B cell (primary cell): ENCODE measurements at regions of chr4 and their contacts with region 1.

Region 1: DNA sequence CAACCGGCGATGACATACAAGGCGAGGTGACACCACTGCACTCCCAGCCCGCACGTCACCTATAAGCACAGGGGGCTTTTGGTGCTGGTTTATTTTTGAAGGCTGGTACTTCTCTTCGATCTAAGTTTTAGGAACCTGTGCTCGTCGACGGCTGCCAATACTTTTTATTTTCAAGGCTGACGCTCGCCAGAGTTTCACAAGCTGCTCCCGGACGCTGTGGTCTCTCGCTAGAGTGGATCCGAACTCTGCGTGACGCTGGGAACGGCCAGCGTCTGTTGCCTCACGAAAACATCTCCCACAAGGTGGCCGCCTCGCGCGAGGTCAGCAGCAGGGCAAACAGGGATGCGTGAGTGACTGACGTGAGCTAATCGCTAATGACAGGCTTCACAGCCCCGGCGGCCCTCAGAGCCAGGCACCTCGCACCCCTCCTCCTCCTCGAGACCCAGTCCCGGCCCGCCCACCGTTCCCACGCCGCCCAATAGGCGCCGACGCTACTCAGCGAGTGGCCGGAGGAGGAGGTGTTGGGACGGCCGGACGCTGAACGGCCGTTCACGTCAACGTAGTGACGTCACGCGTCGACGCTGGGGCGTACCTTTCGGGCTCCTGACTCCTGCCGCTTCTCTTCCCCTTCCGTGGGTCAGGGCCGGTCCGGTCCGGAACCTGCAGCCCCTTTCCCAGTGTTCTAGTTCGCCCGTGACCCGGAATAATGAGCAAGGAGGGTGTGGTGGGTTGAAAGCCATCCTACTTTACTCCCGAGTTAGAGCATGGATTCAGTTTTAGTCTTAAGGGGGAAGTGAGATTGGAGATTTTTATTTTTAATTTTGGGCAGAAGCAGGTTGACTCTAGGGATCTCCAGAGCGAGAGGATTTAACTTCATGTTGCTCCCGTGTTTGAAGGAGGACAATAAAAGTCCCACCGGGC is at the start of gene CLCN3:
- DNase-seq: peak; percentile 99
- ATAC-seq: peak; percentile 93
- H3K4me3 ChIP-seq: peak within 1 kb of the TSS; percentile 61 to 100 (median 95)
- H3K4me3 Mint-ChIP-seq: peak within 1 kb of the TSS; percentile 96
- H3K27ac ChIP-seq: peak within 1 kb of the TSS; percentile 98
- H3K27ac Mint-ChIP-seq: peak within 1 kb of the TSS; percentile 100
- H3K4me1 ChIP-seq: peaks cover 18 to 23% of the 10 kb centered on the region in 2 donors
- H3K4me1 Mint-ChIP-seq: peaks cover 39% of the 10 kb centered on the region
- H3K27me3 ChIP-seq: no peaks in the 10 kb centered on the region
- H3K27me3 Mint-ChIP-seq: no peaks in the 10 kb centered on the region
- CTCF ChIP-seq: no peak
- total RNA-seq, gene CLCN3: 32.7 and 34.9 TPM in 2 replicates

Region 2: GRCh38 chr4:168318266-168318895 is 1301.8 kb before region 1 on chr4 and contains the start of gene DDX60:
- CTCF ChIA-PET with region 1: no interaction called
- POLR2A ChIA-PET with region 1: no interaction called
- intact Hi-C with region 1: loop called (anchors 10 kb)
- DNase-seq: peak; percentile 91
- ATAC-seq: peak; percentile 94
- H3K4me3 ChIP-seq: peak within 1 kb of the TSS; percentile 64 to 90 (median 83)
- H3K4me3 Mint-ChIP-seq: peak within 1 kb of the TSS; percentile 98
- H3K27ac ChIP-seq: peak within 1 kb of the TSS; percentile 80 to 95
- H3K27ac Mint-ChIP-seq: peak within 1 kb of the TSS; percentile 98
- H3K4me1 ChIP-seq: peaks cover 11 to 12% of the 10 kb centered on the region in 2 donors
- H3K4me1 Mint-ChIP-seq: peaks cover 28% of the 10 kb centered on the region
- H3K27me3 ChIP-seq: no peaks in the 10 kb centered on the region
- H3K27me3 Mint-ChIP-seq: no peaks in the 10 kb centered on the region
- CTCF ChIP-seq: peak; percentile 30
- total RNA-seq, gene DDX60: 20.2 and 21.3 TPM in 2 replicates

Region 3: DNA sequence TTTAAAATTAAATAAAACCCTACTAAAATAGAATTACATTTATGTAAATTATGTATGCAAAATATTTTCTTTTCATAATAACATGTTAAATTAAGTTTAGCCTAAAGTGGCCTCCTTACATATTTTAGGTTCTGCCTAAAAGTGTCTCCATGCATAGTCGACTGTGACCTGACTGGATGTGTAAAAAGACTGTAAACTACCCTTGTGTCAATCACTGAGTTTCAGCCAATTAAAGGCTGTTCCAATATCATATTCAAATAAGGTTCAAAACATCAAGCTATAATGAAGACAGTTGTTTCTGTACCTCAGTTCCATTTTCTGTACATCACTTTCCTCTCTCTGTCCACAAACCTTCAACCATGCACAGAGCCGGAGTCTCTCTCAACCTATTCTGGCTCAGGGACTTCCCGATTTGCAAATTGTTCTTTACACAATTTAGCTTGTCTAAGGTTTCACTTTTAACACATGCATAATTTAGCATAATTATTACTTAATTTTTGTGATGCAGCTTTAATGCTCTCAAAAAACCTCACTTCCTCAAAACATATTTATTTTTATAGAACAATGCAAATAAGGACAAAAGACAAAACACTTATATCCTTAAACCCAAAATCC is 409.6 kb before region 1 on chr4:
- CTCF ChIA-PET with region 1: no interaction called
- POLR2A ChIA-PET with region 1: no interaction called
- intact Hi-C with region 1: loop called (anchors 1 kb)
- DNase-seq: peak; percentile 81
- ATAC-seq: peak; percentile 85
- H3K4me3 ChIP-seq: peak overlapping the region in 2 of 5 experiments; percentile 18 to 36
- H3K4me3 Mint-ChIP-seq: peak overlapping the region; percentile 83
- H3K27ac ChIP-seq: peak overlapping the region; percentile 74 to 76
- H3K27ac Mint-ChIP-seq: peak overlapping the region; percentile 92
- H3K4me1 ChIP-seq: peaks cover 24 to 29% of the 10 kb centered on the region in 2 donors
- H3K4me1 Mint-ChIP-seq: peaks cover 43% of the 10 kb centered on the region
- H3K27me3 ChIP-seq: no peaks in the 10 kb centered on the region
- H3K27me3 Mint-ChIP-seq: no peaks in the 10 kb centered on the region
- CTCF ChIP-seq: no peak

Region 4: GRCh38 chr4:169270810-169271691 is 349.2 kb before region 1 on chr4 and contains the start of gene SH3RF1:
- CTCF ChIA-PET with region 1: no interaction called
- POLR2A ChIA-PET with region 1: no interaction called
- intact Hi-C with region 1: loop called (anchors 10 kb)
- DNase-seq: peak; percentile 74
- ATAC-seq: peak; percentile 61
- H3K4me3 ChIP-seq: peak within 1 kb of the TSS; percentile 65 to 90 (median 77)
- H3K4me3 Mint-ChIP-seq: peak within 1 kb of the TSS; percentile 94
- H3K27ac ChIP-seq: peak within 1 kb of the TSS in 1 of 2 donors; percentile 16
- H3K27ac Mint-ChIP-seq: peak within 1 kb of the TSS; percentile 81
- H3K4me1 ChIP-seq: peaks cover 23 to 27% of the 10 kb centered on the region in 2 donors
- H3K4me1 Mint-ChIP-seq: peaks cover 28% of the 10 kb centered on the region
- H3K27me3 ChIP-seq: peaks cover 0 to 7% (median 0%) of the 10 kb centered on the region in 4 experiments
- H3K27me3 Mint-ChIP-seq: no peaks in the 10 kb centered on the region
- CTCF ChIP-seq: peak; percentile 37
- total RNA-seq, gene SH3RF1: 5.4 and 6.5 TPM in 2 replicates

Region 5: DNA sequence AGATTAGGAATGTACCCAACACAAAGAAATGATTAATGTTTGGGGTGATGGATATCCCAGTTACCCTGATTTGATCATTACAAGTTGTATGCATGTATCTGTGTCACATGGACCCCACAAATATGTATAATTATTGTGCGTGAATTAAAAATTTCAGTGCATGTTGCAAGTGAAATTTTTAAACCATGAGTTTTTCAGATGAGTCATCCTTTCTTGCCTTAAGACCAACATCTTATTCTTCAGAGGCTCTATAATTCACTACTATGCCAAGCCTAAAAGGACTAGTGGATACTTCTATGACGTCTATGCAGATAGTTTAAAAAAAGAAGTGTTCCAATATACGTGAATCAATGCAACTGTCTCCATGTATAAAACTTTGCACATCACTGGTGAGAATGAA is 236.5 kb before region 1 on chr4:
- CTCF ChIA-PET with region 1: no interaction called
- POLR2A ChIA-PET with region 1: no interaction called
- intact Hi-C with region 1: no loop called
- DNase-seq: no peak
- ATAC-seq: no peak
- H3K4me3 ChIP-seq: no peak overlapping the region
- H3K4me3 Mint-ChIP-seq: no peak overlapping the region
- H3K27ac ChIP-seq: no peak overlapping the region
- H3K27ac Mint-ChIP-seq: no peak overlapping the region
- H3K4me1 ChIP-seq: peaks cover 10 to 11% of the 10 kb centered on the region in 2 donors
- H3K4me1 Mint-ChIP-seq: peaks cover 21% of the 10 kb centered on the region
- H3K27me3 ChIP-seq: no peaks in the 10 kb centered on the region
- H3K27me3 Mint-ChIP-seq: no peaks in the 10 kb centered on the region
- CTCF ChIP-seq: no peak

Region 6: GRCh38 chr4:169659716-169660670 is 39.8 kb after region 1 on chr4:
- CTCF ChIA-PET with region 1: interaction called, 4 read pairs
- POLR2A ChIA-PET with region 1: interaction called, 7 read pairs
- intact Hi-C with region 1: loop called (anchors 1 kb)
- DNase-seq: peak; percentile 91
- ATAC-seq: peak; percentile 90
- H3K4me3 ChIP-seq: peak overlapping the region; percentile 42 to 75 (median 60)
- H3K4me3 Mint-ChIP-seq: peak overlapping the region; percentile 85
- H3K27ac ChIP-seq: peak overlapping the region; percentile 90 to 92
- H3K27ac Mint-ChIP-seq: peak overlapping the region; percentile 90
- H3K4me1 ChIP-seq: peaks cover 2 to 6% of the 10 kb centered on the region in 2 donors
- H3K4me1 Mint-ChIP-seq: peaks cover 23% of the 10 kb centered on the region
- H3K27me3 ChIP-seq: no peaks in the 10 kb centered on the region
- H3K27me3 Mint-ChIP-seq: no peaks in the 10 kb centered on the region
- CTCF ChIP-seq: no peak

Region 7: GRCh38 chr4:170027181-170027829 is 407.1 kb after region 1 on chr4:
- CTCF ChIA-PET with region 1: no interaction called
- POLR2A ChIA-PET with region 1: no interaction called
- intact Hi-C with region 1: loop called (anchors 1 kb)
- DNase-seq: peak; percentile 94
- ATAC-seq: peak; percentile 76
- H3K4me3 ChIP-seq: peak overlapping the region; percentile 52 to 95 (median 81)
- H3K4me3 Mint-ChIP-seq: peak overlapping the region; percentile 92
- H3K27ac ChIP-seq: no peak overlapping the region
- H3K27ac Mint-ChIP-seq: peak overlapping the region; percentile 80
- H3K4me1 ChIP-seq: peaks cover 11 to 16% of the 10 kb centered on the region in 2 donors
- H3K4me1 Mint-ChIP-seq: peaks cover 12% of the 10 kb centered on the region
- H3K27me3 ChIP-seq: peaks cover 0 to 25% (median 8%) of the 10 kb centered on the region in 4 experiments
- H3K27me3 Mint-ChIP-seq: peaks cover 29% of the 10 kb centered on the region
- CTCF ChIP-seq: no peak